ENCODE measurements at regions of chr20 and their contacts with region 1.

Region 1: DNA sequence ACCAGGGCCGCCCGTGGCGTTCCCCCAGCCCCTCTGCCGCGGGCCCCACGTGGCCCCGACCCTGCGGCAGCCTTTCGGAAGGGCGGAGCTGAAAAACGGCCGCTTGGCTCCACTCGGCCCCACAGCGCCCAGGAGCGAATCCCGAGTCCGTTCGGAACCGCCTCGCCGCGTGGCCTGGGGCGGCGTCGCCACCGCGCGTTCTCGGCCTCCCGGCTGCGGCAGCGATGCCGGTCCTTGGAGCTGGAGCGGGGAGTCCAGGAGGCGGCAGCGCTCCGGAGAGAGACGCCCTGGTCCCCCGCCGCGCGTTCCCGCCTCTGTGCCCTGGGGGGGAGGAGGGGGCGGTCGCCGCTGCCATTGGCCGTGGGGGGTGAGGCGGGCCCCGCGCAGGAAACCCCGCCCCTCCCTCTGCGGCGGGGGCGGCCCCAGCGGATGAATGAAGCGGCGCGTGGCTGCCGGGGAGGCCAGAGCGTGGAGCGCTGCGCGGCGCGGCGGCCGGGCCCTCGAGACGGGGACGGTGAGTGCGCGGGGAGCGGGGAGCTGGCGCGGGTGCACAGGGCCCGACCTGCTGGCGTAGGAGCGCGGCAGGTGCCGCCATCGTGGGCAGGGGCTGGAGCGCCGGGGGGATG is at the start of gene SLCO4A1:
- DNase-seq: peak; percentile 90
- H3K4me3 Mint-ChIP-seq: peak within 1 kb of the TSS; percentile 77
- H3K27ac Mint-ChIP-seq: peak within 1 kb of the TSS; percentile 67
- H3K4me1 Mint-ChIP-seq: no peaks in the 10 kb centered on the region
- H3K27me3 Mint-ChIP-seq: no peaks in the 10 kb centered on the region
- total RNA-seq, gene SLCO4A1: 29.6 to 30.7 TPM

Region 2: DNA sequence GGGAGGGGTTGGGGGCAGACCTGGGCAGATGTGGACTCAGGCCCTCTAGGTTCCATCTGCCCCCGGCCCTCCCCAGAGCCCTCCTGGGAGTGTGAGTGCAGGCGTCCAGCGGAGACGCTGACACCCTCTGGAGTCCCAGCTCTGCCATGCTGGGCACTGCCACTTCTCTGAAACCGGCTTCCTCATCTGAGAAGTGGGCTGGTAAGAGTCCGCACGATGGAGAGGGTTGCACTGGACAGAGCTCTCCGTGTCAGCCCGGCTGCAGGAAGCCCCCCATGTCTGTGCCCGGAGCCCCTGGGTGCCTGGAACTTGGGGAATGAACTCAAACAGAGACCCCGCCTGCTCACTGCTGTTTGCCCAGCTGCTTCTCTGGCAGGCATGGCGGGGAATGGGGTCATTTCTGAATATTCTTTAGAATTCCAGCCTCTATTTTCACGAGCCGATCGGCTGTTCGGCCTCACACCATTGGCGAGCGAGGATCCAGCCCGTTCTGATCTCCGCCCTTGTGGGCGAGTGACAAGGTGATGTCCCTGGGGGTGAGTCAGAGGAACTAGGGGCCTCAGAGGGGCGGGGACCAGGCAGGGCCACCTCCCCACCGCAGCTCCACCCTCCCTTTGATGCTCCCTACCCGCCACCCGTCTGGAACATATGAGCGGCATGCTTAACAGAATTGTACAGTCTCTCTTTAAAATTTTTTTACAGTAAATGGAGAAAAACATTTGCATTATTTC is 118.5 kb before region 1 on chr20:
- CTCF ChIA-PET with region 1: no interaction called
- POLR2A ChIA-PET with region 1: no interaction called
- intact Hi-C with region 1: no loop called
- DNase-seq: peak; percentile 89
- H3K4me3 Mint-ChIP-seq: no peak overlapping the region
- H3K27ac Mint-ChIP-seq: no peak overlapping the region
- H3K4me1 Mint-ChIP-seq: peaks cover 15% of the 10 kb centered on the region
- H3K27me3 Mint-ChIP-seq: peaks cover 20% of the 10 kb centered on the region

Region 3: GRCh38 chr20:62595491-62595890 is 46.7 kb before region 1 on chr20:
- CTCF ChIA-PET with region 1: no interaction called
- POLR2A ChIA-PET with region 1: no interaction called
- intact Hi-C with region 1: no loop called
- DNase-seq: peak; percentile 31
- H3K4me3 Mint-ChIP-seq: no peak overlapping the region
- H3K27ac Mint-ChIP-seq: no peak overlapping the region
- H3K4me1 Mint-ChIP-seq: no peaks in the 10 kb centered on the region
- H3K27me3 Mint-ChIP-seq: peaks cover 37% of the 10 kb centered on the region

Region 4: GRCh38 chr20:62623488-62624324 is 18.4 kb before region 1 on chr20:
- CTCF ChIA-PET with region 1: interaction called, 4 read pairs
- POLR2A ChIA-PET with region 1: interaction called, 14 read pairs
- intact Hi-C with region 1: loop called (anchors 2 kb)
- DNase-seq: peak; percentile 94
- H3K4me3 Mint-ChIP-seq: peak overlapping the region; percentile 61
- H3K27ac Mint-ChIP-seq: peak overlapping the region; percentile 92
- H3K4me1 Mint-ChIP-seq: peaks cover 21% of the 10 kb centered on the region
- H3K27me3 Mint-ChIP-seq: no peaks in the 10 kb centered on the region

Region 5: GRCh38 chr20:62652051-62652926 is 10.1 kb after region 1 on chr20:
- CTCF ChIA-PET with region 1: interaction called, 9 read pairs
- POLR2A ChIA-PET with region 1: interaction called, 21 read pairs
- intact Hi-C with region 1: loop called (anchors 1 kb)
- DNase-seq: peak; percentile 80
- H3K4me3 Mint-ChIP-seq: peak overlapping the region; percentile 63
- H3K27ac Mint-ChIP-seq: peak overlapping the region; percentile 84
- H3K4me1 Mint-ChIP-seq: peaks cover 29% of the 10 kb centered on the region
- H3K27me3 Mint-ChIP-seq: no peaks in the 10 kb centered on the region

Region 6: GRCh38 chr20:62666736-62667529 is 24.8 kb after region 1 on chr20:
- CTCF ChIA-PET with region 1: no interaction called
- POLR2A ChIA-PET with region 1: no interaction called
- intact Hi-C with region 1: no loop called
- DNase-seq: no peak
- H3K4me3 Mint-ChIP-seq: no peak overlapping the region
- H3K27ac Mint-ChIP-seq: no peak overlapping the region
- H3K4me1 Mint-ChIP-seq: no peaks in the 10 kb centered on the region
- H3K27me3 Mint-ChIP-seq: no peaks in the 10 kb centered on the region

Measured in activated CD4-positive, alpha-beta memory T cell treated with anti-CD3 and anti-CD28 coated beads for 36 hours (primary cell).